Activated T-helper 1 cell treated with anti-CD3 and anti-CD28 coated beads, Interleukin-12 subunit alpha, Interleukin-12 subunit beta, Interleukin-2, Interleukin-4 antibody, amounts not matched to agents 30 ng/mL and 10 ng/mL and 1 ng/mL, durations not matched to agents 14 hours and 24 hours and 36 hours (primary cell): ENCODE measurements at regions of chr4 and their contacts with region 1.

Region 1: DNA sequence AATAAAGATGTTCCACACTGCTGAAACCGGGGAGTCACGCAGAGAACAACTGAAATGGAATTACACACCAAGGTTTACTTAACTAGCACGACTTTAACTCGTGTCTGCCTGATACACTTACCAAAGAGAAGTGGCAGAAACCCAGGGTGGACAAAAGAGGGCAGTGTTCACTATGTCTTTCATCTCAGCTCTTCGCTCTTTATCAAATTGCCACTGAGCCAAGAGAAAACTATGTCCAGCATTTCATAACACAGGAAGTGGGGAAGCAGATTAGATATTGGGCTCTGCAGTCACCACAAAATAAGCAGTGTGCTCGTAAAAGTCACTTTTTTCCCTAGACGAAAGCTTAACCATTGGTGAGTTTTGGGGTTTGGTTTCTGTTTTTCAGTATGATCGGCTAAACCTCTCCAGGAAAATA is 155.7 kb downstream of the CHIC2 start:
- DNase-seq: no peak
- H3K4me3 Mint-ChIP-seq: no peak overlapping the region
- H3K27ac Mint-ChIP-seq: no peak overlapping the region
- H3K4me1 Mint-ChIP-seq: peaks cover 17% of the 10 kb centered on the region
- H3K27me3 Mint-ChIP-seq: peaks cover 30% of the 10 kb centered on the region

Region 2: GRCh38 chr4:53987761-53988171 is 79.1 kb after region 1 on chr4:
- intact Hi-C with region 1: no loop called
- DNase-seq: no peak
- H3K4me3 Mint-ChIP-seq: no peak overlapping the region
- H3K27ac Mint-ChIP-seq: no peak overlapping the region
- H3K4me1 Mint-ChIP-seq: no peaks in the 10 kb centered on the region
- H3K27me3 Mint-ChIP-seq: no peaks in the 10 kb centered on the region

Region 3: DNA sequence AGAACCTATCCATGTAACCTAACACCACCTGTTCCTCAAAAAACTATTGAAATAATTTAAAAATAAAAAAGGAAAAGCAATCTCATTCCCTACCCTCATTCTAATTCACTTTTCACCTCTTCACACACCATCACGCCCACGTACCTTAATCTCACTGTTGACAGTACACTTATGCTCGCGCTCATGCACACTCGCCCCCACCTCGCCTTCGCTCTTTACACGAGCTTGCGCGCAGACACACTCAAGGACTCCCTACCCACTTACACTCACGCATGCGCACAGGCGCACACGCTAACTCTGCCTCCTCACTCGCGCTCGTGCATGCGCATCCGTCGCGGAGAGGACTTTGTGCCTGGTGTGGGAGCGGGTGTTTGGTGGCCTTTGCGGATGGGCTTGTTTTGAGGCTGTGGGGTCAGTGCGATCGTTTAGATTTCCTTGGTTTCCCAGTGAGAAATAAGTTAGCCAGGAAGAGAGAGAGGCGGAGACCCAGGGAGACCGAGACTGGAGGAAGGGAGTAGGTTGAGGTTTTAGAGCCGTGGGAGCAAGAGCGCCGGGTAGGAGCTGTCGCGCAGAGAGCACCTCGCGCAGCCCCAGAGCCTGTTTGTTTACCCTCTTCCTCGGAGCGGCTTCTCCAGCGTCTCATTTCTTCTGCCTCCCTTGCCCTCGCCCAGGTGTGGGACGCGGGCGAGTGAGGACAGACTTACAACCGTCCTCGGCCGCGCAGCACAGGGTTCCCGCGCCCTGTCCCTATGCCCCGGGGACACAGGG is 183.2 kb after region 1 on chr4:
- intact Hi-C with region 1: loop called (anchors 5 kb)
- DNase-seq: peak; percentile 71
- H3K4me3 Mint-ChIP-seq: peak overlapping the region; percentile 82
- H3K27ac Mint-ChIP-seq: peak overlapping the region; percentile 30
- H3K4me1 Mint-ChIP-seq: peaks cover 30% of the 10 kb centered on the region
- H3K27me3 Mint-ChIP-seq: peaks cover 74% of the 10 kb centered on the region

Region 4: DNA sequence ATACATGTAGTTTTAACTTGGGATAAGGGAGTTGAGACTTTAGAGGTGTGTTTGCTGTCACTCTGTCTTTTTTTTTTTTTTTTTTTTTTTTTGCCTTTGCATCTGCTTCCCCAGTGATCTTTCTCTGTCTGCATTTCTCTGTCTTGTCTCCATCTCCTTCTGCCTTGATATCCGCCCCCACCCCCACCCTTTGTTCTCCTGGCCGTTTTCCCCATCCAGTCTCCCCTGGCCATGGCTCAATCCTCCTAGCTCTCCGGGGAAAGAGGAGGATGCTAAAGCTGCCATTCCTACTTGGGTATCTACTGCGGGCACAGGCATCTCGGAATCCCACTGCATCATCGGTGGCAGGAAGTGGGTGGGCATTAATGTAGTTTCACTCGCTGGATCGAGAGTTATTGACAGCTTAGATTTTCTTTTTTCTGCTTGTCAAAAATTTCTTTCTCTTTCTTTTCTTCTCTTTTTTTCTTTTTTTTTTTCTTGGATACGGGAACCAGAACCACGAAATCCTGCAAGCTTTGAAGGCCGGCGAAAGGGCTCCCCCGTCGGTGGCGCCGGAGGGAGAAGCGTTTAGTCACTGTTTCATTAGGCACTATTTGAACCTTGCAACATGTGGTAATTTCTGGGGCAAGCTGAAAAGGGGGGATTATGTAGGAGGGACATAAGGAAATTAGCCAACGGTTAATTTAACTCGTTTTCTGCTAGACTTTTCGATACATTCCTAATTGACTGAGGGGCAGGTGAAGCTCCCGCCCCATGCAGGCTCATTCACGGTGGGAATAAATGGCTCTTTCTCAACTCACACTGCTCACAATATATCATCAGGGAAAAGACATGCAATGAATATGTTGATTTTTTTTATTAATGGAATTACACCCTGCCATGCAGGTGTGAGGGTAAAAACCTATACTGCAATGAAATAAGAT is 199.5 kb after region 1 on chr4:
- intact Hi-C with region 1: loop called (anchors 5 kb)
- DNase-seq: no peak
- H3K4me3 Mint-ChIP-seq: no peak overlapping the region
- H3K27ac Mint-ChIP-seq: no peak overlapping the region
- H3K4me1 Mint-ChIP-seq: peaks cover 12% of the 10 kb centered on the region
- H3K27me3 Mint-ChIP-seq: peaks cover 79% of the 10 kb centered on the region

Region 5: DNA sequence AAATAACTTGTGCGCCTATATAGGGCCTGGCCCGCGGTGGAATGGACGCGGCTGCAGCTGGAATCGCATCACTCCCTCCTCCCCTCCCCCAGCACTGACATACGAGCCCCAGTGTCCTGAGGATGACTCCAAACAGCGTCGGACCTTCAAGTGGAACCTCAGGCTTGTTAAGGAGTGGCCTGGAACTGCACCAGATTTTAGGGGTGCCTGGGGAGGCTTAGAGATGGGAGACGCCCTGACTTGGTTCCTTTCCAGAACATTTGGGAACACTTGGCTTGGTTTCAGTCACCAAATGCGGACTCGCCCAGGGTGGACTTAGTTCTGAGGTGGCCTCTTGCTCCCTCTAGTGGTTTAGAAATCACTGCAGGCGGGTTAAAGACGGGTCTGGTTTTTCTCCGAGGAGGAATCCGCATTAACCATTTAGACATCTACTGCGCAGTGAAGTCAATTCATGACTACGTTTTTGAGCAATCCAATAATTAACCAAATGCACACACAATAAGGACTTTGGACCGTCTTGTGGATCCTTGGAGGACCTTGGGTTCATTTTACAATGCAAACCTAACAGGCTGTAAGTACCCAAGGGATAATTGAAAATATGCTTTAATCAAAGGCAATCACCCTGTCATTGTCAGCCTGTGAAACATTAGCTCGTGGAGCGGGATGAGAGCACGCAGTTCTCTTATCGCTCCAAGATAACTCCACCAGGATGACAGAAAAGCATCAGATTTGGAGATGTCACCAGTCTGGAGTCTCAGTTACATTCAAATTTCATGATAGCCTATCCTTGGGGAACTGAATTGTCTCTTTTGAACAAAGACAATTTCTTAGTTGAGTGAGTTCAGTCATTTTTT is 309.2 kb after region 1 on chr4:
- intact Hi-C with region 1: loop called (anchors 1 kb)
- DNase-seq: peak; percentile 19
- H3K4me3 Mint-ChIP-seq: no peak overlapping the region
- H3K27ac Mint-ChIP-seq: no peak overlapping the region
- H3K4me1 Mint-ChIP-seq: peaks cover 4% of the 10 kb centered on the region
- H3K27me3 Mint-ChIP-seq: peaks cover 23% of the 10 kb centered on the region